ENCODE measurements at regions of chr2 and their contacts with region 1.

Region 1: GRCh38 chr2:121649596-121650314 is 493 bp upstream of the CLASP1 start:
- DNase-seq: peak; percentile 92 to 99 (median 98)
- H3K4me3 ChIP-seq: peak overlapping the region; percentile 85
- H3K4me3 Mint-ChIP-seq: peak overlapping the region; percentile 95 to 100 (median 98)
- H3K27ac ChIP-seq: peak overlapping the region; percentile 92
- H3K27ac Mint-ChIP-seq: peak overlapping the region; percentile 99 to 100 (median 99)
- H3K4me1 ChIP-seq: peaks cover 30% of the 10 kb centered on the region
- H3K4me1 Mint-ChIP-seq: peaks cover 58 to 80% (median 69%) of the 10 kb centered on the region in 3 donors
- H3K27me3 ChIP-seq: no peaks in the 10 kb centered on the region
- H3K27me3 Mint-ChIP-seq: peaks cover 0 to 7% of the 10 kb centered on the region in 2 donors

Region 2: DNA sequence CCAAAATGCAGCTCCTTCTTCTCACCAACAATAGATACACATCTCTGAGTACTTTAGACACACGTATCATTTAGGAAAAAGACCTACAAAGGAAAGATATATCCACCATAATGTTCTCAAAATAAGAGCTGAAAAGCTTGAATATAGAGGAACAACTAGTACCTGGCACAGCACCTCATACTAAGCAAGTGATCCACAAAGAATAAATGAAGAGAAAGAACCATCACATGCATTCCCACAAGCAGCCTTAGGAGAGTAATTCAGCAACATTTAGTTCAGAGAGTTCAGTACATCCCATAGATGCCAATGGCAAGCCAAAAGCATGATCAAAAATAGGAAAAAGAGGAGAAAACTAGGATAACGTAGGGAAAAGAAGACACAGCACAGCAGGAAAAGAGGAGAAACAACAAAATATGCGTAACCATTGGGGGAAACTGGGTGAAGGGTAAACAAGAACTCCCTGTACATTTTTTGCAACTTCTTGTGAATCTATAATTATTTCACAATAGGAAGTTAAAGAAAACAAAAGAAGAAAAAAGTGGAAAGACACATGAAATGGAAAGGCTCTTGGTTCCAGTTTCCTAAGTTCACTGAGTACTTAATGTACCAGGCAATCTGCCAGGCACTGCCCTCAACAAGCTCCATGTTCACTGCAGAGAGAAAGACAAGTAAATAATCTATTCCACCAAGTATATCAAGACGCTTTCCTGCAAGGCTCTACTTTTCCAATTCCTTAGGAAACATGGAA is 22.8 kb before region 1 on chr2:
- CTCF ChIA-PET with region 1: no interaction called
- POLR2A ChIA-PET with region 1: no interaction called
- DNase-seq: no peak
- H3K4me3 ChIP-seq: no peak overlapping the region
- H3K4me3 Mint-ChIP-seq: no peak overlapping the region
- H3K27ac ChIP-seq: no peak overlapping the region
- H3K27ac Mint-ChIP-seq: peak overlapping the region in 2 of 8 donors; percentile 2 to 13
- H3K4me1 ChIP-seq: no peaks in the 10 kb centered on the region
- H3K4me1 Mint-ChIP-seq: peaks cover 28 to 43% (median 31%) of the 10 kb centered on the region in 3 donors
- H3K27me3 ChIP-seq: no peaks in the 10 kb centered on the region
- H3K27me3 Mint-ChIP-seq: no peaks in the 10 kb centered on the region

Region 3: DNA sequence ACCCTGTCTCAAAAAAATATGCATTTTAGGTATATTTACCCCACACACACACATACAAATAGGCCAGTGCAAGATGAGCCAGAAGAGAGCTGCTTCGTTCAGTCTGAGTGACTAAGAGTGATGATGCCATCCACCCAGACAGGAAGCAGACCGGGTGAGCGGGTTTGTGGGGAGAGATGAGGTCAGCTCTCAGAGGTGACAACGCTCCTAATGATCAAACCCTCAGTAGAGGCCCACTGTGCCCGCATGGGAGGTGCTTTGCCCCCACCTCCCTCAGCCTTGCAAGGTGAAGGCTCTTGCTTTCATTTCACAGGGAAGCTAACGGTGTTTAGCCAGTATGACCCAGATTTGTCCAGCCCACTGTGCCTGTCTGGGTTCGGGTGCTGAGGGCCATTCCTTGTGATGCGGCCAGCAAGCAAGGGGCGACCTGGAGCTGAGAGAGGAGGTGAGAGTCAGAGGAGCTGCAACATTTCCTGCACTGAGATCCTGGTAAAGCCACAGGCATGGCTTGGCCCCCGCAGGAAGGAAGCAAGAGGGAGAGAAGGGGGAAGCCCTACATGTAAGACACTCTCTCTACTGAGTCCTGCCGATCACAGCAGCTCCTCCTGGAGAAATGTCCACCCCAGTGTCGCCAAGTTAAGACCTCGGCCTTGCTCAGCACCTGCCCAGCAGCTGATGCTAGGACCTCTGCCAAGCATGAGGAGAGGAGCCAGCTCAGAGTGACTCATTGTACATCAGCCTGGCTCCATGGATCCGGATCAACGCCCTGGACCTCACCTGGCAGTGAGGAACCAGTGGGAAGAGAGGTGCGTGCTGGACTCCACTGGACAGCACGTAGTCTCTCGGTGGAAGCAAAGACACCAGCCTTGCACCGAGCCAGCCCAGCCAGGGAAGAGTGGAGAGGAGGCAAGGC is 49.9 kb after region 1 on chr2:
- CTCF ChIA-PET with region 1: interaction called, 7 read pairs
- POLR2A ChIA-PET with region 1: interaction called, 44 read pairs
- DNase-seq: peak; percentile 74 to 96 (median 85)
- H3K4me3 ChIP-seq: peak overlapping the region; percentile 58
- H3K4me3 Mint-ChIP-seq: peak overlapping the region; percentile 73 to 91 (median 87)
- H3K27ac ChIP-seq: peak overlapping the region; percentile 85
- H3K27ac Mint-ChIP-seq: peak overlapping the region; percentile 97 to 100 (median 99)
- H3K4me1 ChIP-seq: peaks cover 31% of the 10 kb centered on the region
- H3K4me1 Mint-ChIP-seq: peaks cover 41 to 49% (median 49%) of the 10 kb centered on the region in 3 donors
- H3K27me3 ChIP-seq: no peaks in the 10 kb centered on the region
- H3K27me3 Mint-ChIP-seq: no peaks in the 10 kb centered on the region

Region 4: GRCh38 chr2:121736462-121737341 is 86.9 kb after region 1 on chr2 and contains the start of gene NIFK:
- CTCF ChIA-PET with region 1: no interaction called
- POLR2A ChIA-PET with region 1: interaction called, 30 read pairs
- DNase-seq: peak; percentile 99 to 100 (median 100)
- H3K4me3 ChIP-seq: peak within 1 kb of the TSS; percentile 97
- H3K4me3 Mint-ChIP-seq: peak within 1 kb of the TSS; percentile 94 to 100 (median 98)
- H3K27ac ChIP-seq: peak within 1 kb of the TSS; percentile 92
- H3K27ac Mint-ChIP-seq: peak within 1 kb of the TSS; percentile 76 to 100 (median 96)
- H3K4me1 ChIP-seq: peaks cover 28% of the 10 kb centered on the region
- H3K4me1 Mint-ChIP-seq: peaks cover 30 to 49% (median 45%) of the 10 kb centered on the region in 3 donors
- H3K27me3 ChIP-seq: no peaks in the 10 kb centered on the region
- H3K27me3 Mint-ChIP-seq: peaks cover 0 to 1% of the 10 kb centered on the region in 2 donors
- total RNA-seq, gene NIFK: 167 to 169 TPM

Measured in CD8-positive, alpha-beta memory T cell (primary cell).